Activated naive CD4-positive, alpha-beta T cell treated with anti-CD3 and anti-CD28 coated beads for 36 hours (primary cell): ENCODE measurements at regions of chr14 and their contacts with region 1.

Region 1: GRCh38 chr14:101964297-101965144 is at the start of gene DYNC1H1:
- DNase-seq: peak; percentile 86
- H3K4me3 Mint-ChIP-seq: peak within 1 kb of the TSS; percentile 89
- H3K27ac Mint-ChIP-seq: peak within 1 kb of the TSS; percentile 71
- H3K4me1 Mint-ChIP-seq: peaks cover 39% of the 10 kb centered on the region
- H3K27me3 Mint-ChIP-seq: no peaks in the 10 kb centered on the region
- total RNA-seq, gene DYNC1H1: 207 to 208 TPM

Region 2: DNA sequence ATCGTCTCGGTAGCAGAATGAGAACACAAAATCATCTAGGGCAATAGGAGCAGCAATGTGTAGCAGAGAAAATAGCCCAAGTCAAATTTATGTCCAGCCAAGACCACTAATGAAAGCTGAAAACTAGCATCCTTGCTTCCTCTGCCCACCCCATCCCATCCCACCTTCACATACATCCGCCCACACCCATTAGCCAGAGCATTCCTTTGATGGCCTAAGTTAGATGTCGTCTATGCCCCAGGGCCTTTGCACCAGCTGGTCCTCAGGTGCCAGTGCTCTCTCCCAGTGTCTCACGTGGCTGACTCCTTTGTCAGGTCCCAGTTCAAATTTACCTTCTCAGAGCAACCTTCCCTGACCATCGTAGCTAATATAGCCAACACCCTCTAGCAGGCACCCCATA is 220.8 kb before region 1 on chr14:
- CTCF ChIA-PET with region 1: no interaction called
- intact Hi-C with region 1: no loop called
- DNase-seq: no peak
- H3K4me3 Mint-ChIP-seq: no peak overlapping the region
- H3K27ac Mint-ChIP-seq: no peak overlapping the region
- H3K4me1 Mint-ChIP-seq: no peaks in the 10 kb centered on the region
- H3K27me3 Mint-ChIP-seq: no peaks in the 10 kb centered on the region

Region 3: DNA sequence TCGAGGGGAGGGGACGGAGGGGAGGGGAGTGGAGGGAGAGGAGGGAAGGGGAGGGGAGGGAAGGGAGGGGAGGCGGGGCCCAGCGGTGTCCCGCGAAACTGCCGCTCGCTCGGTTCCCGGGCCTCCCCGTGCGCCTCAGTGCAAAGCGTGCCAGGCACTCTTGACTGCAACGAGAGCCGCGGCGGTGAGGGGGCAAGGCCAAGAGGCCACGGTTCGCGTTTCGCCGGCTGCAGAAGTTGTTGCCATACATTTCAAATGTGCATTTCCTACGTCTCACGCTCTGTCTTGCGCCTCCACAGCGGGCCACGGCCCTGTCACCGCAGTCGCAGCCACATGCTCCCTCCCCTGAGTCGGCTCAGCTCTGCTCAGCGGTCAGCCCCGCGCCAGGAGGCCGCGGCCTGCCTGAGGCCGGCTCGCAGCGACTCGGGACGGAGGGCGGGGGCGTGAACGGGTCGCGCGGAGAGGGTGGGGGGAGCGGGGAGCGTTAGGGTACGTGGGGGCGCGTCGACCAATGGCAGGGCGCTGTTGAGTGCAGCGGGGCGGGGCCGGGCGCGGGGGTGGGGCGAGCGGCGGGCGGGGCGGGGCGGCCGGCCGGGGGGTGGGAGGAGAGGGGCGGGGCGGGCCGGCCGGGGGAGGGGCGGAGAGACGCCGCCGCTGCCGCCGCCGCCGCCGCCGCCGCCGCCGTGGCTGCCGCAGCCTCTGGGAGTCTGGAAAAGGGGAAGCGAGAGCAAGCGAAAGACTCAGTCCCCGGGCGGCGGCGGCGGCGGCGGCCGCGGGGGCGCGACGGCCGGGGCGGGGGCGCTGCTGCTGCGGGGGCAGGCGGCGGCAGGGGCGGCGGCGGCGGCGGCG is 203.3 kb before region 1 on chr14 and contains the start of gene PPP2R5C:
- CTCF ChIA-PET with region 1: no interaction called
- intact Hi-C with region 1: loop called (anchors 5 kb)
- DNase-seq: peak; percentile 85
- H3K4me3 Mint-ChIP-seq: peak within 1 kb of the TSS; percentile 91
- H3K27ac Mint-ChIP-seq: peak within 1 kb of the TSS; percentile 79
- H3K4me1 Mint-ChIP-seq: peaks cover 42% of the 10 kb centered on the region
- H3K27me3 Mint-ChIP-seq: no peaks in the 10 kb centered on the region
- total RNA-seq, gene PPP2R5C: 280 to 294 TPM

Region 4: DNA sequence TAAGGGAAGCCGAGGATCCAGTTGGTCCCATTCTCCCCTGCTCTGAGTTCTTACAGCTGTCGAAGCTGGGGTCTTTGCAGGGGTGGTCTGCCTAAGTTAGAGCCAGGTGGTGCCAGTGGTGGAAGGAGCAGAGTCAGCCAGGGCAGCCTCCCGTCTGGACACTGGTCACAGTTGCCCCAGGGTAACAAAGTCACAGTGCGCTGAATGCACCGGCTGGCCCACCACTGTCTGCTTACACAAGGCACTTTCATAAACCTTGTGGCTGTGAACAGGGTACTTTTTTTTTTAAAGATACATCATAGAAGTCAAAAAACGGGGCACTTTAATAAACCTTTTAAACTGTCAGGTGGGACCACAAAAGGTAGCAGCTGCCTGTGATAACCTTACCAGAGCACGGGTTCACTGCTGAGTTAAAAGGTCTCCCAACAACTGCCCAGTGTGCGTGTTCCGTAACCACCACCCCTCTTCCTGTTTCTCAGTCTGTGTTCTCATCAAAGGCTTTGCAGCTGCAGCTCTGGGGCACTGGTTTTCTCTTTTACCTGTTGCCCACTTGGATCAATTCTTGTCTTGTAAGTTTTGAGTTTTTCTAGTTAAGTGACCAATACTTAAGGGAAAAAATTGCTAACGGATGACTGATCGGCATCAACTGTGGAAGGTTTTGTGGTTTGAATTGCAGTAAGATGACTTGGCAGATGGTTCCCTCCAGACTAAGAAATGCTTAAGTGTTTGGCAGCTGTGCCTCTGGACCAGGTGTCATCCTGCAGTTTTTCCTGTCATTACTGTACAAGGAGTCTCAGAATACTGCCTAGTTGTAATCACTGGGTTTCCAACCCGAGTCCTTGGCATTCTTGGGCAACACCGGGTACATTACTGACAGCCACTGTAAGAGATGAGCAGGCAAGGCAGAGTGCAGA is 55.8 kb after region 1 on chr14:
- CTCF ChIA-PET with region 1: interaction called, 3 read pairs
- intact Hi-C with region 1: loop called (anchors 1 kb)
- DNase-seq: peak; percentile 82
- H3K4me3 Mint-ChIP-seq: no peak overlapping the region
- H3K27ac Mint-ChIP-seq: peak overlapping the region; percentile 87
- H3K4me1 Mint-ChIP-seq: peaks cover 22% of the 10 kb centered on the region
- H3K27me3 Mint-ChIP-seq: no peaks in the 10 kb centered on the region

Region 5: GRCh38 chr14:102096214-102097114 is 131.9 kb after region 1 on chr14:
- CTCF ChIA-PET with region 1: interaction called, 17 read pairs
- intact Hi-C with region 1: loop called (anchors 1 kb)
- DNase-seq: peak; percentile 83
- H3K4me3 Mint-ChIP-seq: no peak overlapping the region
- H3K27ac Mint-ChIP-seq: no peak overlapping the region
- H3K4me1 Mint-ChIP-seq: peaks cover 15% of the 10 kb centered on the region
- H3K27me3 Mint-ChIP-seq: no peaks in the 10 kb centered on the region

Region 6: DNA sequence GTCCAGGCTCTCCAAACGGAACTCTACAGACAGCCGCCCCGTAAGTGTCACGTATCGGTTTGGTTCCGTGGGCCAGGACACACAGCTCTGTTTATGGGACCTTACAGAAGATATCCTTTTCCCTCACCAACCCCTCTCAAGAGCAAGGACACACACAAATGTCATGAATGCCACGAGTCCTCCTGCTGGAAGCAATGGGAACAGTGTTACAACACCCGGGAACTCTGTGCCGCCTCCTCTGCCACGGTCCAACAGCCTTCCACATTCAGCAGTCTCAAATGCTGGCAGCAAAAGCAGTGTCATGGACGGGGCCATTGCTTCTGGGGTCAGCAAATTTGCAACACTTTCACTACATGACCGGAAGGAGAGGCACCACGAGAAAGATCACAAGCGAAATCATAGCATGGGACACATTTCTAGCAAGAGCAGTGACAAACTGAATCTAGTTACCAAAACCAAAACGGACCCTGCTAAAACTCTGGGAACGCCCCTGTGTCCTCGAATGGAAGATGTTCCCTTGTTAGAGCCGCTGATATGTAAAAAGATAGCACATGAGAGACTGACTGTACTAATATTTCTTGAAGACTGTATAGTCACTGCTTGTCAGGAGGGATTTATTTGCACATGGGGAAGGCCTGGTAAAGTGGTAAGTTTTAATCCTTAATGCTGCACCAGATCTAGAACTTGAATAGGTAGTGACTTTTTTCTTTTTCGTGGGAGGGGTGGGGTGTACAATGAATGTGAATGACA is 244.9 kb after region 1 on chr14:
- CTCF ChIA-PET with region 1: no interaction called
- intact Hi-C with region 1: loop called (anchors 10 kb)
- DNase-seq: no peak
- H3K4me3 Mint-ChIP-seq: no peak overlapping the region
- H3K27ac Mint-ChIP-seq: peak overlapping the region; percentile 9
- H3K4me1 Mint-ChIP-seq: peaks cover 1% of the 10 kb centered on the region
- H3K27me3 Mint-ChIP-seq: no peaks in the 10 kb centered on the region

Region 7: DNA sequence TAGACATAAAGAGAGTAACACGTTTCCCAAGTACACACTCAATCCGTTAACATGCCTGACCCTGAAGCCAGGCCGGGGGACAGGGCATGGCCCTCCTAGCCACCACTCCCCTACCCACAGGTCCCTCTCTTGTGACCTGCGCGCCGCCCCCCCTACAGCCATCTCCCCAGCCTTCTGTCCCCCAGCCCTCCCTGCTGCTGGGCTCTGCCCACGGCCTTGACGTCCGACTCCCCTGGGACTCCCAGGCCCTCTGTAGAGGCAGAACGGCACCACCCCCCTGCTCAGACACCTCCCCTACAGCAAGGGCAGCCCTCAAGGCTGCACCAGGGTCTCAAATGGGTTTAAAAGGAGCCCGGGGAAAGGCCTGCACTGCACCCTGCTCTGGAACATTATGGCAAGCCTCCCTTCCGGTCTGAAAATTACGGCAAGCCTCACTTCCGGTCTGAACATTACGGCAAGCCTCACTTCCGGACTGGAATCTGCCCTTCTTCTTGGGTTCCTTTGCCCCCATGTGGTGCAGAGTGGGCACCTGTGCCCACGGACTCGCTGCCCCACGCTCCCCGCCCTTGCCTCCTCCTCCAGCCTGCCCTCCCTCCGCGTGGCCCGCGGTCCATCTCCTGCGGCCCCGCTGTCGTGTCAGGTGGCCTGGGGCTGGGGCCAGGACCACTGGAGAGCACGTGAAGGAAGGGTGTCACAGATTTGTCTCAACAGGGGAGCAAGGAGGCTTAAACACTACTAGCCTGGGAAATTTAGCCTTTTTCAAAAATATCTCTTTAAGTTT is 262.9 kb after region 1 on chr14:
- CTCF ChIA-PET with region 1: no interaction called
- intact Hi-C with region 1: no loop called
- DNase-seq: no peak
- H3K4me3 Mint-ChIP-seq: no peak overlapping the region
- H3K27ac Mint-ChIP-seq: no peak overlapping the region
- H3K4me1 Mint-ChIP-seq: no peaks in the 10 kb centered on the region
- H3K27me3 Mint-ChIP-seq: no peaks in the 10 kb centered on the region

Region 8: DNA sequence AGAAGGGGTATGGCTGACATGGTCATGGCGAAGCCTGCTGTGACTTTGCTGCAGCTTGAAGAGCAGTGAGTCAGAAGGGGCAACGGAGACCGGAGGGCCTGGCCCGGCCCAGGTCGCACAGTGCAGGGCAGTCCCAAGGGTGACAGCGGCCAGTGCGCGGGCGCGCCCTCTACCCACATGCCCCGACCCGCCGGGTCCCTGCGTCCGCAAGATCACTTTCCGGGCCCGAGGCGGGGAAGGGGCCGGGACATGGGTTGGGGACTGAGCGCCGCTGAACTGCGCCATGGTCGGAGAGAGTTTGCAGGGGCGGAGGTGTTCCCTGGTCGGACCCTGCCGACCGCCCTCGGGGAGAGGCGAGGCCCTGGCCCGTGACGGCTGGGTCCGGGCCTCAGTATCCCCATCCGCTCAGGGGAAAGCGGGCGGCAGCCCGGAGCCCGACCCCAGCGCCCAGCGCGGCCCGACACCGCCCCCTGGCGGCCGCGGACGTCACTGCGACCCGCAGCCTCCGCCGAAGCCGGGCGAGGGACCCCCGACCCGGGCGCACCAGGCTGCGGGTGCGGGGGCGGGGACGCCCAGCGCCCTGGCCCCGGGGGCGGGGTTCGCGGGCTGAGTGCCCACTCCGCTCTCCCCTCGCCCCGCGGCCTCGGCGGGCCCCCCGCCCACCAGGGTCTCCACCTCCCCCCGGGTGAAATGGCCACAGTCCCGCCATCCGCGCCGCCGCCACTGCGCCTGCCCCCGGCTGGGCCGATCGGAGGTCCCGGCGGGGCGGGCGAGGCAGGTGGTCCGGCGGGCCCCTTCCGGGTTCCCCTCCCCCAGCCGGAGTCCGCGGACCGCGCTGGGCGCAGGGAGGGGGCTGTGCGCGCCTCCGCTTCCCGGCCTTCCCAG is 552.3 kb after region 1 on chr14:
- CTCF ChIA-PET with region 1: no interaction called
- intact Hi-C with region 1: loop called (anchors 2 kb)
- DNase-seq: peak; percentile 48
- H3K4me3 Mint-ChIP-seq: peak overlapping the region; percentile 70
- H3K27ac Mint-ChIP-seq: no peak overlapping the region
- H3K4me1 Mint-ChIP-seq: peaks cover 5% of the 10 kb centered on the region
- H3K27me3 Mint-ChIP-seq: peaks cover 3% of the 10 kb centered on the region